BJ (cell line): ENCODE measurements at regions of chr2 and their contacts with region 1.

Region 1: GRCh38 chr2:11270891-11271290 is 73.5 kb downstream of the ROCK2 start:
- DNase-seq: no peak
- H3K4me3 ChIP-seq: no peak overlapping the region
- H3K27me3 ChIP-seq: no peaks in the 10 kb centered on the region
- CTCF ChIP-seq: no peak

Region 2: DNA sequence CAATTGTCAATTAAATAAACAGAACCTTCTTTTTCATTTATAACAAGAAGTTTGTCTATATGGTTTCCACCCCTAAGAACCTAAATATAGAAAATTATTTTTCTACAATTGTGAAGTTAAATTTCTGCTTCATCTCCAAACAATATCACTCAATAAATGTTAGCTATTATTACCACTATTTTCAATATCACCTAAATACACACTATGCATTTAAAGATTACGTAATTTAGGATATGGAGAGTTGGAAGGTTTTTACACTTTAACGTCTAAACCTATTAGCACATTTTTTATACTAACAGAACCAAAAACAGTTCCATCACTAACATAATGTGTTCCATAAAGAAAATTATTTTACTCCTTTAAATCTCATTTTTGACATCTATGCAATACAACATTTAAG is 25.5 kb after region 1 on chr2:
- CTCF ChIA-PET with region 1: interaction called, 4 read pairs
- POLR2A ChIA-PET with region 1: interaction called, 14 read pairs
- DNase-seq: no peak
- H3K4me3 ChIP-seq: no peak overlapping the region
- H3K27me3 ChIP-seq: no peaks in the 10 kb centered on the region
- CTCF ChIP-seq: no peak